ENCODE measurements at regions of chr11 and their contacts with region 1.

Region 1: GRCh38 chr11:82718307-82718706 is 15.4 kb downstream of the FAM181B start:
- DNase-seq: no peak
- ATAC-seq: peak; percentile 62

Region 2: GRCh38 chr11:82867495-82868082 is 149.3 kb after region 1 on chr11:
- intact Hi-C with region 1: loop called (anchors 5 kb)
- DNase-seq: no peak
- ATAC-seq: peak; percentile 19

Region 3: DNA sequence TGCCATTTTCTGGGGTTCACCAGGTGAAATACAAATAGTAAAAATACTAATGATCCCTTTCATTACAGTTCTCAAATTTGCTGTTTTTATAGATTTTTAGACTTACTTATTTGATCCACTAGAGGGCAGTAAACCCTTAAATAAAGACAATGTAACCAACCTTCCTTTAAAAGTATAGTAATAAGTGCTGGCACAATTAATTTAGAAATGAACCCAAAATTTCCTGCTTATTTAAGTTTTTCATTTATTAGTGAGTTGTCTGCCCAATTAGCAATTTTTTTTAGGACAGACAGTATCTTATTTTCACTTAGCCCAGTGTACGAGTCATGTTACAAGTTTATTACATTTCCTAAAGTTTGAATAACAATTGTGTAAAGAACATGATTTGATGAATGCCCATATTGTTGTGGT is 187.9 kb after region 1 on chr11:
- intact Hi-C with region 1: no loop called
- DNase-seq: no peak
- ATAC-seq: no peak

Region 4: GRCh38 chr11:83249972-83250593 is 531.8 kb after region 1 on chr11:
- intact Hi-C with region 1: loop called (anchors 10 kb)
- DNase-seq: no peak
- ATAC-seq: peak; percentile 54